ENCODE measurements at regions of chr5 and their contacts with region 1.

Region 1: DNA sequence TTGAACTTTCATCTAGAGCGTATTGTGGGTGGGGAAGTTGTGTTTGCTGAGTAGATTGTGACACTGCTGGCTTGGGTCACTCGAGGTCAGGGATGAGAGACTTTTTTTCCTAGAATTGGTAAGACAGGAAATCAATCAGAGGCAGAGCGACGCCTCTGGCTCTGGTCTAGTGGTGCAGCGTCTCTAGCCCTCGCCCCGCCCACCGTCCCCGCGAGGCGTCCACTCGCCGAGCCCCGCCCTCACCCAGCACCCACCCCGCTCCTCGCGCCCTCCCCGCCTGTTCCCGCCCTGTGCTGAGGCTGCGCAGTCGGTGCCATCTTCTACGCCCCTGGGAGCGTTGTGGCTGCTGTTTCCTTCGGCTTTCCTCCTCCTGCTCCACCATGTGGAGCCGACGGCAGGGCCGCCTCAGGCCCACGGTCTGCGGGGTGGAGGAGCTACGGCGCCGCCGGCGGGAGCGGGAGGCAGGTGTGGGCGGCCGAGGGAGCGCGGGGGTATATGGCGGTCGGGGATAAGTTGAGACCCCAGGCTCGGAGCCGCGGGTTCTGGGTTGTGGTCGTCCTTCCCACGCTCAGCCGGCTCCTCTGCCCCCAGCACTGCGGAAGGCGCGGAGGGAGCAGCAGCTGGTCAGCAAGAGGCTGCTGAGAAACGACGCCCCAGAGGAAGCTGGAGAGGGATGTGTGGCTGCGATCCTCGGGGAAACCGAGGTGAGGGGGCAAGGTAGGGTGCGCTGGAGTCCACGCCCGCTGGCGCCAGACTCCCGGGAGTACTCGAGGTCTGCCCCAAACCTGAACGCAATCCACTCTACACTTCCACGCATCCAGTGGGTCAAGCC is at the start of gene TMCO6:
- DNase-seq: peak; percentile 89 to 95
- H3K4me3 ChIP-seq: peak within 1 kb of the TSS; percentile 78
- H3K27ac ChIP-seq: peak within 1 kb of the TSS; percentile 73
- H3K4me1 ChIP-seq: peaks cover 10% of the 10 kb centered on the region
- H3K27me3 ChIP-seq: no peaks in the 10 kb centered on the region
- CTCF ChIP-seq: peak; percentile 63
- total RNA-seq, gene TMCO6: 12.1 and 25.2 TPM in 2 replicates

Region 2: GRCh38 chr5:140372971-140373487 is 266.3 kb before region 1 on chr5:
- CTCF ChIA-PET with region 1: no interaction called
- POLR2A ChIA-PET with region 1: no interaction called
- intact Hi-C with region 1: loop called (anchors 1 kb)
- DNase-seq: peak; percentile 56 to 58
- H3K4me3 ChIP-seq: no peak overlapping the region
- H3K27ac ChIP-seq: no peak overlapping the region
- H3K4me1 ChIP-seq: no peaks in the 10 kb centered on the region
- H3K27me3 ChIP-seq: no peaks in the 10 kb centered on the region
- CTCF ChIP-seq: peak; percentile 86

Region 3: GRCh38 chr5:140564196-140565023 is 75.0 kb before region 1 on chr5 and contains the starts of genes APBB3 and SLC35A4:
- CTCF ChIA-PET with region 1: no interaction called
- POLR2A ChIA-PET with region 1: no interaction called
- intact Hi-C with region 1: loop called (anchors 2 kb)
- DNase-seq: peak; percentile 87 to 92
- H3K4me3 ChIP-seq: peak within 1 kb of the TSS; percentile 76
- H3K27ac ChIP-seq: peak within 1 kb of the TSS; percentile 56
- H3K4me1 ChIP-seq: peaks cover 14% of the 10 kb centered on the region
- H3K27me3 ChIP-seq: no peaks in the 10 kb centered on the region
- CTCF ChIP-seq: no peak
- total RNA-seq, gene APBB3: 23.4 and 26.0 TPM in 2 replicates
- total RNA-seq, gene SLC35A4: 44.2 and 66.2 TPM in 2 replicates

Region 4: DNA sequence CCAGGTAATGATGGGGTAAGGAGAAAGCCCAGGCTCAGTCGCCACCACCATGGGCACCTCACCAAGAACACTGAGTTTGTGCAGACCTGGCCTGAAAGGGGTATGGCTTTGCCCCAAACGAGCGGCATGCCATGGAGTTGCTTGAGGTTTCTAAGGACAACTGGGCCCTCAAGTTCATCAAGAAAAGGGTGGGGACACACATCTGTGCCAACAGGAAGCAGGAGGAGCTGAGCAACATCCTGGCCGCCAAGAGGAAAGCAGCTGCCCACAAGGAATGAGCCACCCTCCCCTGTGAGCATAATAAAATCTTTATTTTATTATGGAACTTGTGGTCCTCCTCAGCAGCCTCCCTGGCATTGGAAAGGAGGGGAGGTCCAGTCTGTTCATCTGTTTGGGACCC is 30.2 kb before region 1 on chr5:
- CTCF ChIA-PET with region 1: no interaction called
- POLR2A ChIA-PET with region 1: no interaction called
- intact Hi-C with region 1: no loop called
- DNase-seq: no peak
- H3K4me3 ChIP-seq: no peak overlapping the region
- H3K27ac ChIP-seq: no peak overlapping the region
- H3K4me1 ChIP-seq: peaks cover 5% of the 10 kb centered on the region
- H3K27me3 ChIP-seq: no peaks in the 10 kb centered on the region
- CTCF ChIP-seq: no peak

Measured in PC-9 (cell line).